ENCODE measurements at regions of chr10 and their contacts with region 1.

Region 1: GRCh38 chr10:63166742-63167258 is 33.7 kb downstream of the NRBF2 start:
- DNase-seq: peak; percentile 19
- ATAC-seq: peak; percentile 84
- H3K4me3 Mint-ChIP-seq: no peak overlapping the region
- H3K27ac Mint-ChIP-seq: no peak overlapping the region
- H3K4me1 Mint-ChIP-seq: peaks cover 35% of the 10 kb centered on the region
- H3K27me3 Mint-ChIP-seq: no peaks in the 10 kb centered on the region
- CTCF ChIP-seq: peak; percentile 79

Region 2: GRCh38 chr10:62961951-62962523 is 204.8 kb before region 1 on chr10:
- CTCF ChIA-PET with region 1: no interaction called
- POLR2A ChIA-PET with region 1: no interaction called
- intact Hi-C with region 1: no loop called
- DNase-seq: no peak
- ATAC-seq: no peak
- H3K4me3 Mint-ChIP-seq: no peak overlapping the region
- H3K27ac Mint-ChIP-seq: no peak overlapping the region
- H3K4me1 Mint-ChIP-seq: no peaks in the 10 kb centered on the region
- H3K27me3 Mint-ChIP-seq: peaks cover 32% of the 10 kb centered on the region
- CTCF ChIP-seq: no peak

Region 3: GRCh38 chr10:63145782-63146181 is 21.0 kb before region 1 on chr10:
- CTCF ChIA-PET with region 1: interaction called, 15 read pairs
- POLR2A ChIA-PET with region 1: interaction called, 3 read pairs
- intact Hi-C with region 1: no loop called
- DNase-seq: no peak
- ATAC-seq: peak; percentile 61
- H3K4me3 Mint-ChIP-seq: no peak overlapping the region
- H3K27ac Mint-ChIP-seq: peak overlapping the region; percentile 15
- H3K4me1 Mint-ChIP-seq: peaks cover 38% of the 10 kb centered on the region
- H3K27me3 Mint-ChIP-seq: no peaks in the 10 kb centered on the region
- CTCF ChIP-seq: no peak

Region 4: DNA sequence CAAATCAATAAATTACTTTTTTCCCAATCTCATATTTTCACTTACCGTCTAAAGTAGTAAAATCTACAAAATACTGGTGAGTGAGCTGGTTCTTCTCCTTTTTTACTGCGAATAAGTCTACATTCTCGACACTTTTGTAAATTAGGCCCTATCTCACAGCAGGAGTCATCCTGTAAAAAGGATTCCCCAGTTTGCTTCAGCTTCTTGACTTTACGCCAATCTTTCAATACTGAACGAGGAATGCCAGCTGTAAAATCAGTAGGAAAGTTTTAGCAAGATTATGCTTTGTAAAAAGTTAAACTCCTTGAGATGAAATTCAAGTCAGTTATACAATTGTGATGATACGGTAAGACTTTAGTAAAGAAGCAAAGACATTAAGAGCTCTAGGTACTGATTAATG is 33.6 kb after region 1 on chr10:
- CTCF ChIA-PET with region 1: interaction called, 12 read pairs
- POLR2A ChIA-PET with region 1: no interaction called
- intact Hi-C with region 1: no loop called
- DNase-seq: no peak
- ATAC-seq: no peak
- H3K4me3 Mint-ChIP-seq: no peak overlapping the region
- H3K27ac Mint-ChIP-seq: no peak overlapping the region
- H3K4me1 Mint-ChIP-seq: peaks cover 13% of the 10 kb centered on the region
- H3K27me3 Mint-ChIP-seq: no peaks in the 10 kb centered on the region
- CTCF ChIP-seq: no peak

Region 5: GRCh38 chr10:63629363-63630084 is 462.7 kb after region 1 on chr10:
- CTCF ChIA-PET with region 1: interaction called, 171 read pairs
- POLR2A ChIA-PET with region 1: interaction called, 7 read pairs
- intact Hi-C with region 1: loop called (anchors 2 kb)
- DNase-seq: peak; percentile 92
- ATAC-seq: peak; percentile 74
- H3K4me3 Mint-ChIP-seq: peak overlapping the region; percentile 78
- H3K27ac Mint-ChIP-seq: peak overlapping the region; percentile 86
- H3K4me1 Mint-ChIP-seq: peaks cover 25% of the 10 kb centered on the region
- H3K27me3 Mint-ChIP-seq: peaks cover 3% of the 10 kb centered on the region
- CTCF ChIP-seq: peak; percentile 90